PC-9 (cell line): ENCODE measurements at regions of chr16 and their contacts with region 1.

Region 1: DNA sequence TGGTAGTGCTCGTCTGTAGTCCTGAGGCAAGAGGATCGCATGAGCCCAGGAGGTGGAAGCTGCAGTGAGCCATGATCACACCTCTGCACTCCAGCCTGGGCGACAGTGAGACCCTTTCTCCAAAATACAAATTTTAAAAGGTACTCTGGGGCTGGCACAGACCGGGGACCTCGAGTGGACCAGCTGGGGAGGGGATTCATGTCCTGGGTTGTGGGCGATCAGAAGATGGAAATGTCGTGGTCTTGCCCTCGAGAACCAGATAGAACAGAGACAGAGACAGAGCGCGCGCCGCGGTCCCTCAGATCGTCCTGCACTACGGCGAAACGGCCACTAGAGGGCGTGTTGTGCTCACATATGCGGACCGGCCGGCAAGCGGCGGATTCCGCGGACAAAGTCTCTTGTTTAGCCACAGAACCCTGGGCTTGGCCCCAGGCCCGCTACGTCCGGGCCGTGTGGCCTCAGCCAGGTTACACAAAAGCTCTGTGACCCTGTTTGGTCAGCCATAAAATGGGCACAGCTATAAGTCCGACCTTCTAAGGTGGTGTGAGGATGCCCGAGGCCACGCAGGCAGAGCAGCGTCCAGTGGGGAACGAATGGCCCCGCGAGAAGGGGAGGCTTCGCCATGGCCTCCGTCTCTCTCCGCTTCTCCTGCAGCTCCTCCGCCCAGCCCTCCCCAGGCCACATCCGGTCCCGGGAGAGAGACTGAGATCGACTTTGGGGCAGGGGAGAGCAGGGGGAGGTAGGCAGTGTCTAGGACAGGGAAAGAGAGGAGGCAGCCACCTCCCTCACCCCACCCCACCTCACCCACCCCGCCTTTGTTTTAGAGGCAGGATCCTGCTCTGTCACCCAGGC is 14.6 kb upstream of the SBK1 start:
- DNase-seq: peak; percentile 57 to 88
- H3K4me3 ChIP-seq: peak overlapping the region; percentile 55; the same call in 1 of the 2 replicates
- H3K27ac ChIP-seq: no peak overlapping the region
- H3K4me1 ChIP-seq: no peaks in the 10 kb centered on the region
- H3K27me3 ChIP-seq: peaks cover 45% of the 10 kb centered on the region
- CTCF ChIP-seq: peak; percentile 98

Region 2: GRCh38 chr16:27972500-27972899 is 305.3 kb before region 1 on chr16:
- CTCF ChIA-PET with region 1: no interaction called
- POLR2A ChIA-PET with region 1: no interaction called
- intact Hi-C with region 1: loop called (anchors 5 kb)
- DNase-seq: peak; percentile 44
- H3K4me3 ChIP-seq: no peak overlapping the region
- H3K27ac ChIP-seq: no peak overlapping the region
- H3K4me1 ChIP-seq: 0 out of 2 replicates have a peak, but pooled peaks cover 5% of the 10 kb centered on the region
- H3K27me3 ChIP-seq: peaks cover 33% of the 10 kb centered on the region
- CTCF ChIP-seq: peak; percentile 77

Region 3: DNA sequence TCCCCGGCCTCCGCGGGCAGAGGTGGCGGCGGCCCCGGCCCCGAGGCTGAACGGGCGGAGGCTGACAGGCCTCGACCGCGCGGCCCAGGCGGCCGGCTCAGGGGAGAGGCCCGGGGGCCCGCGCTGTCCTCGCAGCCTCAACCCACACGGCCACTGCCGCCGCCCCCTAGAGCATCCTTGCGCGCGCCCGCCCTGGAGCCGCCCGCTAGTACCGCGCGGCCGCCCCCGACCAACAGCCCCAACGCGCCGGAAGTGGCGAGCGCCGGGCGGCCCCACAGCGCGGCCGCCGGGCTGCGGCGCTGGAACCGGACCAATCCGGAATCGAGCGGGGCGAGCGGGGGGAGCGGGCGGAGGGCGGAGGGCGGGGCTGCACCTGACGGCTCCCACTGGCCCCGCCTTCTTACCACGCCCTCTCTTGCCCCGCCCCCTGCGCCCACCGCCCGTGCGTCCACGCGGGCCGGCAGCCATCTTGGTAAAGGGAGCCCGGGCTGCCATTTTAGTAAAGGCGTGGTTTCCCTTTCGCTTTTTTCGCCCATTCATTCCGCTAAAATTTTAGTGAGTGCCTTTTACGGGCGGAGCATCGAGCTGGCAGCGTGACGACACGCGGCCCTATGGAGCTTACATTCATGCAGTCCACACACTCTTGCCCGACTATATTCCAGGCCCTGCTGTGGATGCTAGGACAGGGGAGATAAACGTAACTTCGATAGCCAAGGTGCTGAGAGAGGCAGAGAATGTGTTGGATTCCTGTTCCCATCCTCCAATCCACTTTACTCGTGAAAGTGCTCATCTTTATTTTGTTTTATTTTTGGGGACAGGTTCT is 65.8 kb before region 1 on chr16 and contains the start of gene XPO6:
- CTCF ChIA-PET with region 1: no interaction called
- POLR2A ChIA-PET with region 1: no interaction called
- intact Hi-C with region 1: no loop called
- DNase-seq: peak; percentile 81 to 99
- H3K4me3 ChIP-seq: peak within 1 kb of the TSS; percentile 89
- H3K27ac ChIP-seq: peak within 1 kb of the TSS; percentile 32; the same call in 1 of the 2 replicates
- H3K4me1 ChIP-seq: peaks cover 25% of the 10 kb centered on the region
- H3K27me3 ChIP-seq: no peaks in the 10 kb centered on the region
- CTCF ChIP-seq: no peak
- total RNA-seq, gene XPO6: 154 and 221 TPM in 2 replicates

Region 4: GRCh38 chr16:28317040-28317880 is 39.5 kb after region 1 on chr16:
- CTCF ChIA-PET with region 1: interaction called, 4 read pairs
- POLR2A ChIA-PET with region 1: no interaction called
- intact Hi-C with region 1: loop called (anchors 1 kb)
- DNase-seq: peak; percentile 46 to 67
- H3K4me3 ChIP-seq: no peak overlapping the region
- H3K27ac ChIP-seq: no peak overlapping the region
- H3K4me1 ChIP-seq: no peaks in the 10 kb centered on the region
- H3K27me3 ChIP-seq: no peaks in the 10 kb centered on the region
- CTCF ChIP-seq: peak; percentile 98

Region 5: GRCh38 chr16:28572696-28573510 is 295.1 kb after region 1 on chr16:
- CTCF ChIA-PET with region 1: interaction called, 13 read pairs
- POLR2A ChIA-PET with region 1: no interaction called
- intact Hi-C with region 1: no loop called
- DNase-seq: no peak
- H3K4me3 ChIP-seq: no peak overlapping the region
- H3K27ac ChIP-seq: no peak overlapping the region
- H3K4me1 ChIP-seq: no peaks in the 10 kb centered on the region
- H3K27me3 ChIP-seq: no peaks in the 10 kb centered on the region
- CTCF ChIP-seq: no peak

Region 6: DNA sequence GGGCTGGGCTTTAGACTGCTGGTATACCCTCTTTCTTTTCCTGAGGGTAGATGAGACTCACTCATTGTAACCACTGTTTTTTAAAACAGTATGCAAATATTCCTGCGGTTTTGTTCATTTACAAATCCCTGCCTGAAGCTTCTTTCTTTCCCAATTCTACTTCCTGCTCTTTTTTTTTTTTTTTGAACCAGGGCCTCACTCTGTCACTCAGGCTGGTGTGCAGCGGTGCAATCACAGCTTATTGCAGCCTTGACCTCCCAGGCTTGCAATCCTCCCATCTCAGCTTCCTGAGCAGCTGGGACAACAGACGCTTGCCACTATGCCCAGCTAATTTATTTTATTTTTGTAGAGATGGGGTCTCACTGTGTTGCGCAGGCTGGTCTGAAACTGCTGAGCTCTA is 340.1 kb after region 1 on chr16:
- CTCF ChIA-PET with region 1: interaction called, 3 read pairs
- POLR2A ChIA-PET with region 1: no interaction called
- intact Hi-C with region 1: loop called (anchors 5 kb)
- DNase-seq: peak in 1 of 2 experiments; percentile 87
- H3K4me3 ChIP-seq: no peak overlapping the region
- H3K27ac ChIP-seq: peak overlapping the region; percentile 54
- H3K4me1 ChIP-seq: peaks cover 33% of the 10 kb centered on the region
- H3K27me3 ChIP-seq: no peaks in the 10 kb centered on the region
- CTCF ChIP-seq: no peak